Lower lobe of right lung (tissue), 2 donors: ENCODE measurements at regions of chrX and their contacts with region 1.

Region 1: GRCh38 chrX:9708904-9709553 is 56.6 kb downstream of the GPR143 start:
- DNase-seq: peak; percentile 78
- ATAC-seq: peak; percentile 85 to 89
- H3K4me3 ChIP-seq: no peak overlapping the region
- H3K27ac ChIP-seq: no peak overlapping the region
- H3K4me1 ChIP-seq: no peaks in the 10 kb centered on the region
- H3K27me3 ChIP-seq: no peaks in the 10 kb centered on the region
- CTCF ChIP-seq: peak; percentile 75

Region 2: GRCh38 chrX:8971116-8971515 is 737.9 kb before region 1 on chrX:
- intact Hi-C with region 1: loop called (anchors 10 kb)
- DNase-seq: no peak
- ATAC-seq: peak in 1 of 2 donors; percentile 63
- H3K4me3 ChIP-seq: no peak overlapping the region
- H3K27ac ChIP-seq: no peak overlapping the region
- H3K4me1 ChIP-seq: no peaks in the 10 kb centered on the region
- H3K27me3 ChIP-seq: no peaks in the 10 kb centered on the region
- CTCF ChIP-seq: peak; percentile 32